ENCODE measurements at regions of chr9 and their contacts with region 1.

Region 1: DNA sequence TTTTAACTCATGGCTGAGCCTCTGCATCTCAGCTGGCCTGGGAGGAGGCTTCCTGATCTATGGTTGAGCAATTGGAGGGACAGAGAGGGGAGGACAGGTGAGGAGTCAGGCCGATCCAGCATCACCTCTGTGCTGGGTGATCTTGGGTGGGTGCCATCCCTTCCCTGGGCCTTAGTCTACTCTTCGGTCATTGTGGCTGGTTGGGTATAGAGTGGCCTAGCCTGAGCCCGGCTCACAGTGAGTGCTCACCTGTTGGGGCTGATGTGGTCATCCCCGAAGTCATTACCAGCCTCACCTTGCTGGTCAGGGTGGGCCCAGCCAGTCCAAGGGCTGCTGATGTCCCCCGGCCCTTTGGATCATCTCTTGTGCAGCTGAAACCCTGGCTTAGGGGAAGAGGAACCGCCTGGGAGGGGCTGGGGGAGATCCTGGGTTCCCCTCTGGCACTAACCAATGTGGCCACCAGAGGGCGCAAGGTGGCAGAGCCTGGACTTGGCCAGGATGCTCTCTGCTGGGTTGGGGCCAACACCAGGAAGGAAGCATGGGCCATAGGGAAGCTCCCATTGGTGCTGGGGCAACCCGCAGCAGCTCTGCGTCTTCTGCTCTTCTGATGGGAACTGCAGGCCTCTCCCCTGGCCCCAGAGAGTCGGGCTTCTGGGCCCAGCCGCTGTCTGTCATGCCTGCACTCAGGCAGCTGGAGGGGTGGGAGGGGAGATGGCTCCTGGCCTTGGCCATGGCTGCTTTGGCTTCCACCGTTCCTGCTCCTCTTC is 17.3 kb upstream of the ODF2 start:
- DNase-seq: no peak
- H3K4me3 ChIP-seq: no peak overlapping the region
- H3K27me3 ChIP-seq: no peaks in the 10 kb centered on the region
- CTCF ChIP-seq: peak; percentile 97

Region 2: DNA sequence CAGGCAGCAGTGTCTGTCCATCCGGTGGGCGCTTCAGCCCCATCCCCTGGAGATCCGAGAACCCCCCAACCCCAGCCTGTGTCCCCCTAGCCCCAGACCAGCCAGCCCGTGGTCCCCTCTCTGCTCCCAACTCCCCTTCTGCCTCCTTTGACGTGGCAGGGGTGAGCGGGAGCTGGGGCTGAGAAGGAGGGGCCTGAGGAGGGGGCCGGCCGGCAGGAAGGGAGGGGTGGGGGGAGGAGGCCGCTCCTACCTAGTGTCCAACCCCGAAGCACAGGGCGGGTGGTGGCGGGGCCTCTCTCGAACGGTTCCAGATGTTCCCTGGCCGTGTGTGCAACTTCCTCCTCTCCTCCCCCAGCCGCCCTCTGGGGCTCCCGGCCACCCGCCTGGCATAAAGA is 193.7 kb before region 1 on chr9:
- CTCF ChIA-PET with region 1: no interaction called
- POLR2A ChIA-PET with region 1: no interaction called
- DNase-seq: peak; percentile 59
- H3K4me3 ChIP-seq: peak overlapping the region; percentile 82
- H3K27me3 ChIP-seq: no peaks in the 10 kb centered on the region
- CTCF ChIP-seq: no peak

Region 3: DNA sequence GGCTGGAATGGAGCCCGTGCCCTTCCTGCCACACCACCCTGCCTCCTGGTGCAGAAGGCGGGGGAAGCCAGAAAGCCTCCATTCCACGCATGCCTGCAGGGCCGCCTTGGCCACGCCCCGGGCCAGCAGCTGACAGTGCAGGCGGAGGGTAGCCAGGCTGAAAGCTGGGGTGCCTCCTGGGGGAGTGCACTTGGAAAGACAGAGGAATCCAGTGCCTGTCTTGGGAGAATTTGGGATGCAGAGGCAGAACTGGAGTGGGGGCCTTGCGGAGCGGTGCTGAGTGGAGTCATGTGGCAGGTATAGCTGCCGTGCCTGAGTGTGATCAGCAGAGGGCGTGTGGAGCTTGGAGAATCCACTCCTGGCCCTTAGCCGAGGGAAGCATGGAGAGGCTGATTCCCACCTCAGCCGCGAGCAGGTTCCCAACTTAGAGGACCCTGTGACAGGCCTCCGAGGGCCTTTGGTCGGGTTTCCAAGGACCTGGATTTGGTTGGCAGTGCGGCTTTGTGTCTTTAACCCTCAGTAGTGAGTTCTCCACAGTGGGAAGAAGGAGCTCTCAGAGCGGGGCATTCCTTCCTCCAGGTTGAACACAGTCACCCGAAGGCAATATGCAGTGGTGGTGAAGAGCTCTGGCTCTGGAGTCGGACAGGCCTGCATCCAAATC is 76.4 kb before region 1 on chr9:
- CTCF ChIA-PET with region 1: interaction called, 10 read pairs
- POLR2A ChIA-PET with region 1: no interaction called
- DNase-seq: peak; percentile 42
- H3K4me3 ChIP-seq: peak overlapping the region; percentile 21
- H3K27me3 ChIP-seq: no peaks in the 10 kb centered on the region
- CTCF ChIP-seq: peak; percentile 94

Region 4: GRCh38 chr9:128420060-128420650 is 18.4 kb before region 1 on chr9:
- CTCF ChIA-PET with region 1: interaction called, 16 read pairs
- POLR2A ChIA-PET with region 1: interaction called, 6 read pairs
- DNase-seq: no peak
- H3K4me3 ChIP-seq: peak overlapping the region; percentile 60
- H3K27me3 ChIP-seq: peaks cover 6% of the 10 kb centered on the region
- CTCF ChIP-seq: peak; percentile 60

Region 5: GRCh38 chr9:128448746-128449145 is 10.2 kb after region 1 on chr9:
- CTCF ChIA-PET with region 1: interaction called, 25 read pairs
- POLR2A ChIA-PET with region 1: interaction called, 7 read pairs
- DNase-seq: no peak
- H3K4me3 ChIP-seq: no peak overlapping the region
- H3K27me3 ChIP-seq: no peaks in the 10 kb centered on the region
- CTCF ChIP-seq: no peak

Region 6: DNA sequence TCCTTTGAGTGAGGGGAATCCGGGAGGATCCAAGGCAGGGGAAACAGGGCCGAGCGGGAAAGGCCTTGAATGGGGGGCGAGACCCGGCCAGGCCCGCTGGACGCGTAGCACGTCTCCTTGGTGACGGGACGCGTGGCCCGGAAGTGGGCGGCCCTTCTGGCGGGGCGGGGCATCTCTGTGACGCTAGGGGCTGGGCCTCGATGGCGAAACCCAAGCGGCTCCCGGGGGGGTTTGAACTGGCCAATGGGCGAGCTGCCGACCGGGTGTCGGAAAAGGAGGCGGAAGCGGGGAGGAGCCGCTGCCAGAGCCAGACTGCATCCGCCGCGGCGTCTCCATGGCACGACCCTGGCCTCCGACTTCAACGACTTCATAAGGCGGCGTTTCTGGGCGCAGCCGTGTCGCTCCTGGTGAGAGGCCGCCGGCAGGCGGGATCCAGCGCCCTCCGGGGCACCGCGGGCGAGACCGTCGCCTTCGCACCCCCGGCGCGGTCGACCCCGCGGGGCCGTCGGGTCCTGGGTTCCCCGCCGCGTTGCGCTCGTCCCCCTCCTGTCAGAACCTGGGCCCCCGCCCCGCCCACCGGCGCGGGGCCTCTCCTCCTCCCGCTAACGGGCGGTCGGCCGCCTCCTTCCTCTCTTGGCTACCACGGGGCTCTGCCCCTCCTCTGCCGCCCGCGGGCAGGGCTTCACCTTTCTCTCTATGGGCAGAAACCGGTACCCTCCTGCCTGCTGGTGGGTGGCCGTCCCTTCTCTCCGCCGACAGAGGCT is 17.5 kb after region 1 on chr9 and contains the start of gene ODF2:
- CTCF ChIA-PET with region 1: interaction called, 12 read pairs
- POLR2A ChIA-PET with region 1: interaction called, 7 read pairs
- DNase-seq: peak; percentile 61
- H3K4me3 ChIP-seq: peak within 1 kb of the TSS; percentile 90
- H3K27me3 ChIP-seq: no peaks in the 10 kb centered on the region
- CTCF ChIP-seq: no peak
- polyA plus RNA-seq, gene ODF2: 16.3 and 21.5 TPM in 2 replicates

Region 7: DNA sequence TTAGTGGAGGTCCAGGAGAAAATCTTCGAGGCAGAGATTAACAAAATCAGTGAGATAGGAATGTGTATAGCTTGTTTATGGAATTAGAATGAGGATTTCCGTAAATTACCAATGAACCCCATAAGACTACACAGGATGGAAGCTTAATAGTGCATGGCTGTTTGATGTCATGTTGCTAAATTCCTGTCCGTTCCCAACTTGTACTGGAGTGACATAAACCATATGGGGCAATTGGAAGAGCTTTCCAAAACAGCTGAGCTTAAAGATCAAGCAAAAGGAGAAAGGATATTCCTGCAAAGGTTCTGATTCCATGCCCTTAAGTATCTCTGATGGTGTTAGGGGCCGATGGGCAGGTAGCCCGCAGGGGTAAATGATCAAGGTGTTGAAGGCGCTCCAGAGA is 83.4 kb after region 1 on chr9:
- CTCF ChIA-PET with region 1: no interaction called
- POLR2A ChIA-PET with region 1: no interaction called
- DNase-seq: no peak
- H3K4me3 ChIP-seq: no peak overlapping the region
- H3K27me3 ChIP-seq: no peaks in the 10 kb centered on the region
- CTCF ChIP-seq: no peak